Heart left ventricle (tissue), 16 donors: ENCODE measurements at regions of chr3 and their contacts with region 1.

Region 1: GRCh38 chr3:15256861-15257341 is 50.9 kb downstream of the CAPN7 start:
- DNase-seq: no peak
- ATAC-seq: peak; percentile 46 to 68 (median 56)
- H3K4me3 ChIP-seq: no peak overlapping the region
- H3K27ac ChIP-seq: peak overlapping the region in 10 of 12 donors; percentile 4 to 70 (median 37)
- H3K4me1 ChIP-seq: peaks cover 0 to 25% (median 3%) of the 10 kb centered on the region in 12 donors
- H3K27me3 ChIP-seq: no peaks in the 10 kb centered on the region
- CTCF ChIP-seq: no peak
- POLR2A ChIP-seq: no peak

Region 2: DNA sequence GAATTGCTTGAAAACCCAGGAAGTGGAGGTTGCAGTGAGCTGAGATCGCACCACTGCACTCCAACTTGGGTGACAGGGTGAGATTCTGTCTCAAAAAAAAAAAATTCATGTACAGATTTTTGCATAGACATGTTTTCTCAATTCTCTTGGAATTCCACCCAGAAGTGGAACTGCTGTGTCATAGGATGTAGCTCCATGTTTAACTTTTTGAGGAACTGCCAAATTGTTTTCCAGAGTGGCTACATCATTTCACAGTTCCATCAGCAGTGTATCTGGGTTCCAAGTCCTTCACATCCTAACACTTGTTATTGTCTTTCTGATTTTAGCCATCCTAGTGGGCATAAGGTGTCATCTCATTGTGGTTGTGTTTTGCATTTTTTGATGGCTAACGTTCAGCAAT is 40.9 kb before region 1 on chr3:
- intact Hi-C with region 1: loop called in 1 of 10 experiments (anchors 5 kb)
- DNase-seq: no peak
- ATAC-seq: no peak
- H3K4me3 ChIP-seq: no peak overlapping the region
- H3K27ac ChIP-seq: no peak overlapping the region
- H3K4me1 ChIP-seq: peaks cover 2 to 44% (median 14%) of the 10 kb centered on the region in 12 donors
- H3K27me3 ChIP-seq: no peaks in the 10 kb centered on the region
- CTCF ChIP-seq: no peak
- POLR2A ChIP-seq: no peak